ENCODE measurements at regions of chr11 and their contacts with region 1.

Region 1: GRCh38 chr11:111574373-111575225 is 27.6 kb upstream of the SIK2 start:
- DNase-seq: no peak
- ATAC-seq: peak; percentile 50
- H3K4me3 ChIP-seq: no peak overlapping the region
- H3K27ac ChIP-seq: no peak overlapping the region
- H3K4me1 ChIP-seq: peaks cover 7% of the 10 kb centered on the region
- H3K27me3 ChIP-seq: no peaks in the 10 kb centered on the region
- CTCF ChIP-seq: peak; percentile 53

Region 2: GRCh38 chr11:111283945-111284481 is 290.6 kb before region 1 on chr11:
- CTCF ChIA-PET with region 1: no interaction called
- POLR2A ChIA-PET with region 1: no interaction called
- intact Hi-C with region 1: loop called (anchors 5 kb)
- DNase-seq: no peak
- ATAC-seq: no peak
- H3K4me3 ChIP-seq: no peak overlapping the region
- H3K27ac ChIP-seq: no peak overlapping the region
- H3K4me1 ChIP-seq: no peaks in the 10 kb centered on the region
- H3K27me3 ChIP-seq: peaks cover 61% of the 10 kb centered on the region
- CTCF ChIP-seq: no peak

Region 3: GRCh38 chr11:111302298-111302697 is 272.3 kb before region 1 on chr11:
- CTCF ChIA-PET with region 1: no interaction called
- POLR2A ChIA-PET with region 1: interaction called, 10 read pairs
- intact Hi-C with region 1: no loop called
- DNase-seq: no peak
- ATAC-seq: no peak
- H3K4me3 ChIP-seq: no peak overlapping the region
- H3K27ac ChIP-seq: no peak overlapping the region
- H3K4me1 ChIP-seq: no peaks in the 10 kb centered on the region; the same call in 1 of the 2 replicates
- H3K27me3 ChIP-seq: peaks cover 85% of the 10 kb centered on the region
- CTCF ChIP-seq: no peak

Region 4: GRCh38 chr11:111454561-111455192 is 119.9 kb before region 1 on chr11:
- CTCF ChIA-PET with region 1: no interaction called
- POLR2A ChIA-PET with region 1: no interaction called
- intact Hi-C with region 1: loop called (anchors 1 kb)
- DNase-seq: peak; percentile 80
- ATAC-seq: peak; percentile 90
- H3K4me3 ChIP-seq: no peak overlapping the region
- H3K27ac ChIP-seq: no peak overlapping the region
- H3K4me1 ChIP-seq: peaks cover 6% of the 10 kb centered on the region
- H3K27me3 ChIP-seq: no peaks in the 10 kb centered on the region
- CTCF ChIP-seq: peak; percentile 57